ENCODE measurements at regions of chr17 and their contacts with region 1.

Region 1: DNA sequence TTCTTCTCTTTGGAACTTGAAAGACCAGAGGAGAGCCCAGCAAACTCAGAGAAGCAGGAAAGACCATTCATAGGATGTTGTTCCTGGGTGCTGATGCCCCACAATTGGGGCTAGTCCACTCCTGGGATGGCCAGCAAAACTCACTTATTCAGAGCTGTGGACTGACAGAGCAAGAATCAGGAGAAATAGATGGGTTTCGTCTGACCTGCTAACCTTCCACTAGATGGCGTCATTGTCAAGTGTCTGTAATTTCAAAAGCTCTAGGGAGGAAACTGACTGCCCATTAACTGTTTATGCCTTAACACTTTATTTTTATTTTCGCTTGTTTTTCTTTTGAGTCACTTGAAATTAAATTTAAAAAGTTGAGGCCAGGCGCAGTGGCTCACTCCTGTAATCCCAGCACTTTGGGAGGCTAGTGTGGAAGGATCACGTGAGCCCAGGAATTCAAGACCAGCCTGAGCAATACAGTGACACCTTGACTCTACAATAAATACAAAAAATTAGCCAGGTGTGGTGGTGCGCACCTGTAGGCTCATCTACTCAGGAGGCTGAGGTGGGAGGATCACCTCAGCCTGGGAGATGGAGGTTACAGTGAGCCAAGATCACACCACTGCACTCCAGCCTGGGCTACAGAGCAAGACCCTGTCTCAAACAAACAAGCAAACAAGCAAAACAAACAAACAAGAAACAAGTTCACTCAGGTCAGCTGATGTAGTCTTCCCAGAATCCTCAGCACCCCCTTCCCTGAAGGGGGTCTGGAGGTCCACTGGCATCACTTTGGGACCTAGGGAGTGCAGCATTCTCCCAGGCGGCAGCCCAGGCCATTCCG is 28.6 kb upstream of the MILR1 start:
- DNase-seq: peak; percentile 85
- ATAC-seq: peak; percentile 90 to 91
- H3K4me3 ChIP-seq: no peak overlapping the region
- H3K27ac ChIP-seq: 0 out of 6 replicates have a peak overlapping the region, but pooled peaks of 1 of the 2 experiments have one; percentile 9
- H3K4me1 ChIP-seq: no peaks in the 10 kb centered on the region
- CTCF ChIP-seq: peak; percentile 97
- EP300 ChIP-seq: no peak
- POLR2A ChIP-seq: no peak
- RAD21 ChIP-seq: peak; percentile 95 to 96

Region 2: DNA sequence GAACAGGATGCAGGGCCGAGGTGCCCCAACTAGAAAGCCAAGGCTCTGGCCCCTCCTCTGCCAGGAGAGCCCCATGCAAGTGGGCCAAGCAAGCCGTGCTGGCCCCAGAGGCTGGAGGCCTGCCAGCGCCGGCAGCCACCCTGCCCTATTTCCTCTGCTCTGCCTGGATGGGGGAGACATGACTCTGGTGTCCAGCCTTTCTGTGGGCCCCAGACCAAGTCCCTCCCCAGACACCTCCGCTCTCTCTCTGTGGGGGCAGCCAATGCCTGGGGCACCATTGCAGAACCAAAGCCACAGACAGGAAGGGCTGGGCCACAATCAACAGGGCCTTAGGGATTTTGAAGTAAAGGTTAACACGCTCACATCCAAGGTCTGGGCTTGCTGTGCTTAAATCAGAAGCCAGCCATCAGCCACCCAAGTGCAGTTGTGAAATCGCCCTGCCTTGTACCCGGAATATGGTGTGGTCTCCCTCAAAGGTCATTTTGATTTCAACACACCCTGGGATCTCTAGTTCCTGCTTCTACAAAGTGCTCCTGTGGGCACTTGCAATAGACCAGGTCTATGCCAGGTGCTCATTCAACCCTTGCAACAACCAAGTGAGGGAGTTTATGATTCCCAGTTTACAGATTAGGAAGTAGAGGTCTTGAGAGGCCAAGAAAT is 93.8 kb before region 1 on chr17:
- CTCF ChIA-PET with region 1: interaction called, 776 read pairs
- POLR2A ChIA-PET with region 1: no interaction called
- DNase-seq: peak in 1 of 2 experiments; percentile 38
- ATAC-seq: peak in 1 of 2 experiments; percentile 26; a peak in 2 of 6 replicates
- H3K4me3 ChIP-seq: no peak overlapping the region
- H3K27ac ChIP-seq: peak overlapping the region in 1 of 2 experiments; percentile 52; a peak in 3 of 6 replicates
- H3K4me1 ChIP-seq: 0 out of 3 replicates have a peak, but pooled peaks cover under 1% of the 10 kb centered on the region
- CTCF ChIP-seq: no peak
- EP300 ChIP-seq: peak; percentile 19 to 69; a peak in 2 of 5 replicates
- POLR2A ChIP-seq: peak; percentile 7; the same call in 1 of the 2 replicates
- RAD21 ChIP-seq: no peak

Region 3: DNA sequence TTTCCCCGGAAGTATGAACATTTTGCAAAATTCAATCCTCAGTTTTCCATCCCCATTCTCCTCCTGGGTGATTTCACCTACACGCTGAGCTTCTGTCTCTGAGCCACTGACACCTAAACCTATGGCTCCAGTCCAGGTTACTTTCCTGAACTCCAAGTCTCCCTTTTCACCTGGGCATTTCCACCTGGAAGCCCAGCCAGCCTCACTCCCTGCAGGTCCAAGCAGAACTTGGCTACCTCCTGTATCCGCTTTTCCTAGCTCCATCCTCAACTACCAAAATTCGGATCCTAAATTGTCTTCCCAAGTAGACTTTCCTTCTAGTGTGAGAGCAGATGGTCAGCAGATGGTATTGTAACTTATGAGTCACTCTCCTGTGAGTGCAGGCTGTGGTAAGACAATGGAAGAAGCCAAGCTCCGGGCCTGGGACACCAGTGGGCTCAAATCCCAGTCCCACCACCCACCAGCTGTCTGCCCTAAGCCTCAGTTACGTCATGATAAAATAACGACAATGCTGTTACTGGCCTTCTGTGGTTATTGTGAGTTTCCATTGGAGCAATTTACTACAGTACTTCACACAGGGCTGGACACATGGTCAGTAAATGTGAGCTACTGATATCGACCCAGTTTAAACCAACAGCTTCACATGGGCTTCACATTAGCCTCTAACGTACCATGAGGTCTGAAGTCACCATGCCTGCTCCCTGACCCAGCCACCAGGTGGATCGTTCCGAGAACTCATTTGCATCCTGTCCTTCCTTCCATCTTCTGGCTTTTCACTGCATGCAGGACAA is 63.0 kb before region 1 on chr17:
- CTCF ChIA-PET with region 1: interaction called, 16 read pairs
- POLR2A ChIA-PET with region 1: no interaction called
- DNase-seq: no peak
- ATAC-seq: peak; percentile 14 to 27; a peak in 2 of 6 replicates
- H3K4me3 ChIP-seq: no peak overlapping the region
- H3K27ac ChIP-seq: no peak overlapping the region
- H3K4me1 ChIP-seq: no peaks in the 10 kb centered on the region
- CTCF ChIP-seq: no peak
- EP300 ChIP-seq: no peak
- POLR2A ChIP-seq: no peak
- RAD21 ChIP-seq: no peak

Region 4: DNA sequence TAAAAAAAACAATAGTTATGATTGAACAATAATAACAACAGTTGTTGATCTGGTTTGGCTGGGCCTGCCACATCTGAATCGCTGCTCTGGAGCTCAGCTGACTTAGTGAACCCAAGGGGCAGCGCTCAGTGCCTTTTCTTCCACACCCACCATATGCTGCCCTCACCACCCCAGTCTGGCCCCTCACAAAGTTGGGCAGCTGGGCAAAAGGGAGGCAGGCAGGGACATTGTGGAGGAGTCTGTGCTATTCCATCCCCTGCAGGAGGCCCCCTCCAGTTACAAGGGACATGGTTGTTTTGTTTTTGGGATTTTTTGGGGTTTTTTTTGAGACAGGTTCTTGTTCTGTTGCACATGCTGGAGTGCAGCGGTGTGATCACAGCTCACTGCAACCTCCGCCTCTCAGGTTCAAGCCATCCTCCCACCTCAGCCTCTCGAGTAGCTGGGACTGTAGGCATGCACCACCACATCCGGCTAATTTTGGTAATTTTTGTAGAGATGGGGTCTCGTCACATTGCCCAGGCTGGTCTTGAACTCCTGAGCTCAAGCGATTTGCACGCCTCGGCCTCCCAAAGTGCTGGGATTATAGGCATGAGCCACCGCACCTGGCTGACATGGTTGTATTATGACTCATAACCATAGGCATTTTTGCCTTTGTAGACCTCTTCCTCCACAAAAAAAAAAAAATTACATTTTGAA is 21.1 kb before region 1 on chr17:
- CTCF ChIA-PET with region 1: interaction called, 39 read pairs
- POLR2A ChIA-PET with region 1: interaction called, 4 read pairs
- DNase-seq: no peak
- ATAC-seq: no peak
- H3K4me3 ChIP-seq: no peak overlapping the region
- H3K27ac ChIP-seq: no peak overlapping the region
- H3K4me1 ChIP-seq: peaks cover 15% of the 10 kb centered on the region
- CTCF ChIP-seq: no peak
- EP300 ChIP-seq: no peak
- POLR2A ChIP-seq: no peak
- RAD21 ChIP-seq: no peak

Region 5: DNA sequence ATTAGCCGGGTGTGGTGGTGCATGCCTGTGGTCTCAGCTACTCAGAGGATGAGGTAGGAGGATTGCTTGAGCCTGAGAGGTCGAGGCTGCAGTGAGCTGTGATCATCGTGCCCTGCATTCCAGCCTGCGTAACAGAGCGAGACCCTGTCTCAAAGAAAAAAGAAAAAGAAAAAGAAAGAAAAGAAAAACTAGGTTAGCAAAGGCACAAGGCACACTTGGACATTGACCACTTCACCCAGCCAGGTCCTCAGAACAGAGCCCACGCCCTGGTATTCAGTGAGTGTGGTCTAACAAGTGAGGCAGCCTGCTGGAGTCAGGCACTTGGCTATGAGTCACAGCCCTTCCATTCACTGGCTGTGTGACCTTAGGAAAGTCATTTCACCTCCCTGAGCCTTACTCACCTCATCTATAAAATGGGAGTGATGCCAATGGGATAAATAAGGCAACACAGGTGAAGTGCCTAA is 39.0 kb after region 1 on chr17:
- CTCF ChIA-PET with region 1: interaction called, 48 read pairs
- POLR2A ChIA-PET with region 1: no interaction called
- DNase-seq: peak in 1 of 2 experiments; percentile 51
- ATAC-seq: peak; percentile 58 to 73; a peak in 4 of 6 replicates
- H3K4me3 ChIP-seq: no peak overlapping the region
- H3K27ac ChIP-seq: no peak overlapping the region
- H3K4me1 ChIP-seq: peaks cover 5% of the 10 kb centered on the region; the same call in 1 of the 3 replicates
- CTCF ChIP-seq: no peak
- EP300 ChIP-seq: no peak
- POLR2A ChIP-seq: no peak
- RAD21 ChIP-seq: no peak

Region 6: GRCh38 chr17:64496786-64497564 is 76.6 kb after region 1 on chr17 and contains the start of gene POLG2:
- CTCF ChIA-PET with region 1: interaction called, 300 read pairs
- POLR2A ChIA-PET with region 1: interaction called, 9 read pairs
- DNase-seq: peak; percentile 96 to 97
- ATAC-seq: peak; percentile 86 to 88
- H3K4me3 ChIP-seq: peak within 1 kb of the TSS; percentile 70
- H3K27ac ChIP-seq: peak within 1 kb of the TSS; percentile 87 to 91
- H3K4me1 ChIP-seq: peaks cover 60% of the 10 kb centered on the region
- CTCF ChIP-seq: peak; percentile 58
- EP300 ChIP-seq: no peak
- POLR2A ChIP-seq: peak; percentile 91
- RAD21 ChIP-seq: peak; percentile 38 to 48; a peak in 3 of 5 replicates
- polyA plus RNA-seq, gene POLG2: 28.8 and 31.3 TPM in 2 replicates

Region 7: DNA sequence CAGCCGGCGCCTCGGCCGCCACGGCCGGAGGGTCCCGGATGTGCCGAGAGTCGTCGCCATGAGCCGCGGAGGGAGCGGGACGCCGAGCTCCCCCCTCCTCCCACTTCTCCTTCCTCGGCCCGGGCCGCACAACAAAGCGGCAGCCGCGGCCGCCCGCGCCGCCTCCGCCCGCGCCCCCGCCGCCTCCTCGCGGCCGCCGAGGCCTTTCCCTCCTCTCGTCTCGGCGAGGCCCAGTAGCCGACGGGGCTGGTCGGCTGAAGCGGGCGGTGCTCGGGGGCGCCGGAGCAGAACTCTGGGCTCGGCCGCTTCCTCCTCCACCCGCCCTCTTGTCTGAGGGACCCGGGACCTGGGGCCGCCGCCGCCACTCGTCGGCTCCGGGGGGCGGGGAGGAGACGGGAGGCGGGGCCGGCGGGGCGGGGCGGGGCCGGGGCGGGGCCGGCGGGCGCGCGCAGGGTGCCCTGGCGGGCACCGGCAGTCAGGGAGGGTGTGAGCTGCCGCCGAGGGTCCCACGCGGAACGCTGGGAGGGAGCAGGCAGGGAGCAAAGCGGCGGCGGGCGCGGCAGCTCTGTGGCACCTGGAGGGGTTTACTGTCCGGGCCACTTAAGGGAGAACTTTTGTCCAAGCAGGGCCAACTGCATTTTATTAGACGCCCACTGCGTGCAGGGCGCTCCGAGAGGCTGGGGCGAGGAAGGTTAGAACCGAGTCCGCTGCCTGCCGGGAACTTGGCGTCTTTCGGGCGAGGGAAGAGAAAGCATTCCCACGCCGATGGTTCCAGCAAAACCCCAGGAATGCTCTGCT is 241.8 kb after region 1 on chr17 and contains the start of gene SMURF2:
- CTCF ChIA-PET with region 1: no interaction called
- POLR2A ChIA-PET with region 1: no interaction called
- DNase-seq: peak; percentile 78 to 89
- ATAC-seq: peak; percentile 80 to 84
- H3K4me3 ChIP-seq: peak within 1 kb of the TSS; percentile 92
- H3K27ac ChIP-seq: peak within 1 kb of the TSS; percentile 92 to 94
- H3K4me1 ChIP-seq: peaks cover 54% of the 10 kb centered on the region
- CTCF ChIP-seq: no peak
- EP300 ChIP-seq: no peak; a peak in 1 of 5 replicates
- POLR2A ChIP-seq: peak; percentile 87
- RAD21 ChIP-seq: peak; percentile 14 to 27; a peak in 2 of 5 replicates
- polyA plus RNA-seq, gene SMURF2: 26.3 and 29.1 TPM in 2 replicates

Region 8: GRCh38 chr17:64773836-64774761 is 353.7 kb after region 1 on chr17:
- CTCF ChIA-PET with region 1: interaction called, 10 read pairs
- POLR2A ChIA-PET with region 1: no interaction called
- DNase-seq: peak; percentile 85 to 95
- ATAC-seq: peak; percentile 85 to 92
- H3K4me3 ChIP-seq: peak overlapping the region; percentile 38
- H3K27ac ChIP-seq: peak overlapping the region; percentile 65 to 81
- H3K4me1 ChIP-seq: peaks cover 24% of the 10 kb centered on the region
- CTCF ChIP-seq: peak; percentile 73
- EP300 ChIP-seq: no peak
- POLR2A ChIP-seq: no peak
- RAD21 ChIP-seq: peak; percentile 60 to 79